H1 (cell line): ENCODE measurements at regions of chr9 and their contacts with region 1.

Region 1: DNA sequence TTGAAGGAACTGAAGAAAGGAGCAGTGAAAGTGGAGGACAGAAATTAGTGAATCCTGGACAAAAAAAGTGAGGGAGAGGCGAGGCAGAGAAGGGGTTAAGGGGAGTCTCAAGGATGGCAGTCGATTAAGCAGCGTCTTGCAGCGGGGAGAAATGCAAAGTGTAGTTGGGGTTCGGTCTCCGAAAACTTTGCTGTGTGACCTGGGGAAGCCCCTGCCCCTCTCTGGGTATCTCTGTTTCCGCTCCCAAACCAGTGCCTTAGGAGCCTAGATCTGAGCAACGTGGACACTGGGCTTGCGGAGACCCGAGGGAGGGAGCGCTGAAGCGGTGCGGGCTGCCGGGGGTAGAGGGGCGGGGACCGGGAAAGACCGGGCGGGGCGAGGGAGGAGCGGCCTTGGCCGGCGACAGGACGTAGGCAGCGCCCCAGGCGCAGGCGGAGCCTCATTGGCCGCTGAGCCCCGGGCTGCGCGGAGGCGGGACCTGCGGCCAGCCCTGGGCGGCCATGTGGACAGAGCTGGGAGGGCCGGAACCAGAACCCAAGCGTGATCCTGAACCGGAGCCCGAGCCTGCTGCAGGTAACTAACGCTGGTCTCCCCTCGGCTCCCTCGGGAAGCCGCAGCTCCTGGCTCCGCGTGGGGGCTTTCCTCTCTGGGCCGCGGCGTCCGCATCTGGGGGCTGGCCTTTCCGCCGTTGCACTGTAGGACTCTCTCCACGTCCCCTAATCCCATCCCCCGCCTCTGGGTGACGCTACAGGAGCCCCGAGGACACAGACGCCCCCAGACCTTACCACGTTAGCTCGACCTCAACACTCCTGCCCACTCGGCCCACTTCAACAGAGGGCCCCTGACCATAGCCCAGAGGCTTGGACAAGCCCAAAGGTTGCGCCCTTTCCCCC is at the start of gene ALDH1B1:
- DNase-seq: peak; percentile 73 to 89
- H3K4me3 ChIP-seq: peak within 1 kb of the TSS; percentile 70 to 88 (median 80)
- H3K27ac ChIP-seq: peak within 1 kb of the TSS; percentile 82
- H3K4me1 ChIP-seq: peaks cover 0 to 6% (median 4%) of the 10 kb centered on the region in 4 experiments; a peak in 3 of 7 replicates
- H3K27me3 ChIP-seq: 0 out of 7 replicates have a peak, but pooled peaks cover 0 to 5% (median 0%) of the 10 kb centered on the region in 4 experiments
- CTCF ChIP-seq: peak; percentile 16 to 47 (median 37); a peak in 3 of 4 replicates
- EP300 ChIP-seq: 0 out of 3 replicates have a peak, but pooled peaks of 1 of the 2 experiments have one; percentile 38
- POLR2A ChIP-seq: peak; percentile 57 to 94
- RAD21 ChIP-seq: peak; percentile 14 to 18; a peak in 2 of 4 replicates
- total RNA-seq, gene ALDH1B1: 78.5 and 78.7 TPM in 2 replicates

Region 2: GRCh38 chr9:38346811-38347210 is 45.7 kb before region 1 on chr9:
- CTCF ChIA-PET with region 1: no interaction called
- POLR2A ChIA-PET with region 1: no interaction called
- DNase-seq: peak in 1 of 2 experiments; percentile 51
- H3K4me3 ChIP-seq: peak overlapping the region in 2 of 4 experiments; percentile 3 to 32; a peak in 3 of 8 replicates
- H3K27ac ChIP-seq: no peak overlapping the region
- H3K4me1 ChIP-seq: peaks cover 0 to 14% (median 9%) of the 10 kb centered on the region in 4 experiments; a peak in 5 of 7 replicates
- H3K27me3 ChIP-seq: peaks cover 0 to 18% (median 4%) of the 10 kb centered on the region in 4 experiments; a peak in 4 of 7 replicates
- CTCF ChIP-seq: no peak
- EP300 ChIP-seq: no peak
- POLR2A ChIP-seq: no peak
- RAD21 ChIP-seq: no peak

Region 3: GRCh38 chr9:38417003-38417945 is 24.8 kb after region 1 on chr9:
- CTCF ChIA-PET with region 1: interaction called, 15 read pairs
- POLR2A ChIA-PET with region 1: interaction called, 7 read pairs
- DNase-seq: peak in 1 of 2 experiments; percentile 95
- H3K4me3 ChIP-seq: no peak overlapping the region
- H3K27ac ChIP-seq: no peak overlapping the region
- H3K4me1 ChIP-seq: peaks cover 8 to 30% (median 16%) of the 10 kb centered on the region in 4 experiments
- H3K27me3 ChIP-seq: no peaks in the 10 kb centered on the region
- CTCF ChIP-seq: peak; percentile 86 to 90 (median 87)
- EP300 ChIP-seq: no peak
- POLR2A ChIP-seq: no peak
- RAD21 ChIP-seq: peak; percentile 65 to 76

Region 4: GRCh38 chr9:38482918-38483592 is 90.6 kb after region 1 on chr9:
- CTCF ChIA-PET with region 1: no interaction called
- POLR2A ChIA-PET with region 1: no interaction called
- DNase-seq: no peak
- H3K4me3 ChIP-seq: no peak overlapping the region
- H3K27ac ChIP-seq: peak overlapping the region; percentile 75; the same call in 1 of the 2 replicates
- H3K4me1 ChIP-seq: peaks cover 11 to 24% (median 21%) of the 10 kb centered on the region in 4 experiments
- H3K27me3 ChIP-seq: no peaks in the 10 kb centered on the region
- CTCF ChIP-seq: no peak
- EP300 ChIP-seq: no peak
- POLR2A ChIP-seq: no peak
- RAD21 ChIP-seq: no peak